ENCODE measurements at regions of chr5 and their contacts with region 1.

Region 1: DNA sequence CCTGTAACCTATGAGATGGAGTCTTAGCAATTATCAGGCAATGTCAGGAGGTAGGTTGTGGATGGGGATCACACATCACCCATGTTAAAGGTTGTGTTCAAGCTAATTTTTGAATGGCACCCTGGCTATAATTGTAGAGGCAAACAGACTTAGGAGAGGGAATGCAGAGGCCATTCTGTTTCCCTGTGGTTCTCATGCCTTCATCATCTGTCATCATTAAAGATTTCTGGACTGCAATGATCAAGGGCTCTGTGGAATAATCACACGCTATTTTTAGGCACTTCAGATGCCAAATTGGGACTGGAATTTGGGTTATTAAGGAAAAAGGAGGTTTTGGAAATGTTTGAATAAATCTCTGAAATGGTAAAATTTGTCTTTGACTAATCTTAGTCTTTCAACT is 1065.4 kb downstream of the TAF11L14 start:
- H3K4me3 ChIP-seq: no peak overlapping the region
- H3K27ac ChIP-seq: no peak overlapping the region
- H3K4me1 ChIP-seq: no peaks in the 10 kb centered on the region
- CTCF ChIP-seq: no peak

Region 2: DNA sequence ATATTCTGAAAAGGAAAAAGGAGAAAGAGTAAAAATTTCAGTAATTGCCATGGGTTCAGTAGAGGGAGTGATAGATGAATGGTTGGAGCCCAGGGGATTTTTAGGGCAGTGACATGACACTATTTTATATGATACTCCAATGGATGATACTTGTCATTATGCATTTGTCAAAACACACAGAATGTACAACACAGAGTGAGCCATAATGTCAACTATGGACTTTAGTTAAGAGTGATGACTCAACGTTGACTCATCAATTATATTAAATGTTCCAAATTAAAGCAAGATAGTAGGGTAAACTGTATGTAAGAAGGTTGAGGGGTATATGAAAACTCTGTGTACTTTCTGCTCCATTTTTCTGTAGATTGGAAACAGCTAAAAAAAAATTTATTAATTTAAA is 479.1 kb before region 1 on chr5:
- CTCF ChIA-PET with region 1: no interaction called
- POLR2A ChIA-PET with region 1: no interaction called
- H3K4me3 ChIP-seq: no peak overlapping the region
- H3K27ac ChIP-seq: no peak overlapping the region
- H3K4me1 ChIP-seq: no peaks in the 10 kb centered on the region
- CTCF ChIP-seq: no peak

Region 3: GRCh38 chr5:18465833-18466591 is 233.7 kb before region 1 on chr5:
- CTCF ChIA-PET with region 1: interaction called, 52 read pairs
- POLR2A ChIA-PET with region 1: no interaction called
- H3K4me3 ChIP-seq: no peak overlapping the region
- H3K27ac ChIP-seq: no peak overlapping the region
- H3K4me1 ChIP-seq: no peaks in the 10 kb centered on the region
- CTCF ChIP-seq: peak; percentile 47

Region 4: DNA sequence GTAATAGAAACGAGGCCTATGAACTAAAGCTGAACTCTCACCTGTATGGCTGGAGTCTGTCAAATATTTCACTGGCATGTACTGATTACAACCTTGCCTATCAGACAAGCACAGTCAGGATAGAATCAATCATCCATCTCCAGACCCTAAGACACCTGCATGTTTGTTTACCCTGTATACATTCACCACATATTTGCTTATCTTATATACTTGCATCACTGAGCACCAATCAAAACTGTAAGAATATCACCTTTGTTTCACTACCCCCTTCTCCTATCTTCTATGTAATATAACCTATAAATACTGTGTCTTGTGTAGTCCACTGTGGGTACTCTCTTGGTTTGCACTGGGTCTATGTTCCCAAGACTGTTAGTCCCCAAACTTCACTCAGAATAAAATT is 20.3 kb after region 1 on chr5:
- CTCF ChIA-PET with region 1: interaction called, 10 read pairs
- POLR2A ChIA-PET with region 1: no interaction called
- H3K4me3 ChIP-seq: no peak overlapping the region
- H3K27ac ChIP-seq: no peak overlapping the region
- H3K4me1 ChIP-seq: no peaks in the 10 kb centered on the region
- CTCF ChIP-seq: no peak